GM23248 (cell line): ENCODE measurements at regions of chr6 and their contacts with region 1.

Region 1: DNA sequence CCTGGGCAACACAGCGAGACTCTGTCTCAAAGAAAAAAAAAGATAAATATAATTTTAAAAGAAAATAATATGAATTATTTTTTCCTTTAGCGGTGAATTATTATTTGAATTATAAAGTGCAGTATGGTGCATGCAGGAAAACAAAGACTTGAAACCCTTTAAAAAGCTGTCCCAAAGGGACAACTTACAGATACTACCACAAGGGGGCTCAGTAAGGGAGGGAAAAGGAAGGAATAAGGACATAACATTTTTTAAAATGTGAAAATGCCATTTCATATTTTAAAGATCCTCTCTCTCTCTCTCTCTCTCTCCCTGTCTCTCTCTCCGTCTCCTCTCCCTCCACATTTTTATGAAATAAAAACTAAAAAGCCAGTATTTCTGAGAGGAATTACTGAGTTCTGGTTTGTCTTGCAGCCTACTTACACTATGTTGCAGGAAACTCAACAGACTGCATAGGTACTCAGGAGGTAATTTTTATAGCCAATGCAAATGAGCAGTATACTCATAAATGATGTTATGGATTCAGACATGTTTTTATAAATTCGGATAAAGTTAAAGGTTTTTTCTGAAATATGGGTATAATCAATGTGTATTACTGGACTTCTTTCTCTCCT is 455.0 kb upstream of the GJE1 start:
- DNase-seq: peak; percentile 61
- H3K4me3 ChIP-seq: no peak overlapping the region
- H3K27ac ChIP-seq: no peak overlapping the region
- H3K4me1 ChIP-seq: peaks cover 9% of the 10 kb centered on the region
- H3K27me3 ChIP-seq: no peaks in the 10 kb centered on the region

Region 2: GRCh38 chr6:142112451-142113061 is 434.9 kb after region 1 on chr6:
- in situ Hi-C with region 1: loop called (anchors 25 kb)
- DNase-seq: peak; percentile 75
- H3K4me3 ChIP-seq: no peak overlapping the region
- H3K27ac ChIP-seq: no peak overlapping the region
- H3K4me1 ChIP-seq: no peaks in the 10 kb centered on the region
- H3K27me3 ChIP-seq: no peaks in the 10 kb centered on the region